ENCODE measurements at regions of chr7 and their contacts with region 1.

Region 1: DNA sequence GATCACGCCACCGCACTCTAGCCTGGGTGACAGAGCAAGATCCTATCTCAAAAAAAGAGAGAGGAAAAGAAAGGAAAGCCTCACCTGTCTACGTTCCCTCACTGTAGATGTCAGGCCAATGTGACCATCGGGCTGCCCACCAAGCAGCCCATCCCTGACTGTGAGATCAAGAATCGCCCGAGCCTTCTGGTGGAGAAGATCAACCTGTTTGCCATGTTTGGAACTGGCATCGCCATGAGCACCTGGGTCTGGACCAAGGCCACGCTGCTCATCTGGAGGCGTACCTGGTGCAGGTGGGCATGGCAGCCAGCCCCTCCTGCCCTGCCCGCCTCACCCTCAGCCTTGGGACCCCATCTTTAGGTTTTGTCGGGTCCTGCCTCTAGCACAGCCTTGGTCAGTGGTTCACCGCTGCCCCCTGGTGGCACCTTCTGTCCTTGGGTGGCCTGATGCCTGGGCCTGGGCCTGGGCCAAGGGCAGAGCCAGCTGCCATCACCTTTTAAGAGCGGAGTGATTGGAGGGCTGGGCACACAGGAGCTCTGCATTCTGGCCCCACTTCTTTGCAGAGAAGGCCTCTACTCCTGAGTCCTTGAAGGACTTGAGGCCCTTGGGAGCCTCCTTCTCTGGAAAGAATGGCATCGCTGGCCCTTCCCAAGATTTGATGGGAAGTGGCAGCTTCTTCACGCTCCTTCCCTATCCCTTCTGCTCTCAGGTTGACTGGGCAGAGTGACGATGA is 14.4 kb upstream of the AHCYL2 start:
- DNase-seq: peak; percentile 83 to 95 (median 92)
- ATAC-seq: peak; percentile 84 to 86
- H3K4me3 ChIP-seq: no peak overlapping the region
- H3K27ac ChIP-seq: no peak overlapping the region
- H3K4me1 ChIP-seq: no peaks in the 10 kb centered on the region
- H3K27me3 ChIP-seq: no peaks in the 10 kb centered on the region

Region 2: GRCh38 chr7:129163875-129164544 is 46.4 kb before region 1 on chr7:
- intact Hi-C with region 1: loop called in 3 of 4 experiments (anchors 1 to 5 kb)
- DNase-seq: no peak
- ATAC-seq: no peak
- H3K4me3 ChIP-seq: no peak overlapping the region
- H3K27ac ChIP-seq: no peak overlapping the region
- H3K4me1 ChIP-seq: no peaks in the 10 kb centered on the region
- H3K27me3 ChIP-seq: no peaks in the 10 kb centered on the region

Region 3: GRCh38 chr7:129169171-129169671 is 41.2 kb before region 1 on chr7:
- intact Hi-C with region 1: loop called in 3 of 4 experiments (anchors 1 to 5 kb)
- DNase-seq: peak; percentile 63 to 90 (median 88)
- ATAC-seq: peak; percentile 92 to 94
- H3K4me3 ChIP-seq: peak overlapping the region; percentile 50
- H3K27ac ChIP-seq: no peak overlapping the region
- H3K4me1 ChIP-seq: no peaks in the 10 kb centered on the region
- H3K27me3 ChIP-seq: no peaks in the 10 kb centered on the region

Region 4: DNA sequence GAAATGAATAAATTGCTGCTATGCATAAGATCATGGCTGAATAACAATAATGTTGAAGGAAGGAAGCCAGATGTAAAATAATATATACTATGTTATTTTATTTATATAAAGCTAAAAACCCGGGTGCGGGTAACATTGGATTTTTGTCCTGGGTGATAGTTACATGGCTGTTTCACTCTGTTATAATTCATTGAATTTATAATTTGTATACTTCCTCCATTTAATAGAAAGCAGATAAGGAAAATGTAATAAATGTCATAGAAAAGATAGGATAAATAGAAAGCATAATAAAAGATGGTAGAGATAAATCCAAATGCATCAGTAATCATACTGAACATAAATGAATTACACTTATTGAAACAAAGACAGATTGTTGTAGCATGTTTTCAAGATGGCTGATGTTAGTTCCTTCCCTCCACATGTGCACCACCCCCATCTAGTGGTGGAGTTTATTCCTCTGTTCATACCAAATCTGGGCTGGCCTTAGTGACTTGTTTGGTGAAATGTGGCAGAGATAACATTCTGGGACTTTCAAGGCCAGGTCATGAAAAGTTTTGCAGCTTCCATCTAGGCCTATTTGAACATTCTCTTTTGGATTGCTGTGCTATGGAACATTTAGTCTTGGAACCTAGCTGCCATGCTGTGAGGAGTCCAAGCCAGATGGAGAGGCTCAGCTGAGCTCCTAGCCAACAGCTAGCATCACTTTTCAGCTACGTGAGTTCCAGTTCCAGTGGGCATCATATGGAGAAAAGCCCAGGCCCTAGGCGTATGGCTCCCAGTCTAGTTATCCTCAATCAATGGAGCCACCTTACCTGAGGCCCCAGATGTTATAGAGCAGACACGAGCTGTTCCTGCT is 61.3 kb after region 1 on chr7:
- intact Hi-C with region 1: no loop called
- DNase-seq: no peak
- ATAC-seq: peak in 1 of 2 donors; percentile 71
- H3K4me3 ChIP-seq: no peak overlapping the region
- H3K27ac ChIP-seq: no peak overlapping the region
- H3K4me1 ChIP-seq: no peaks in the 10 kb centered on the region
- H3K27me3 ChIP-seq: no peaks in the 10 kb centered on the region

Region 5: GRCh38 chr7:129468087-129468486 is 257.7 kb after region 1 on chr7:
- intact Hi-C with region 1: loop called in 3 of 4 experiments (anchors 5 to 10 kb)
- DNase-seq: no peak
- ATAC-seq: no peak
- H3K4me3 ChIP-seq: no peak overlapping the region
- H3K27ac ChIP-seq: no peak overlapping the region
- H3K4me1 ChIP-seq: no peaks in the 10 kb centered on the region
- H3K27me3 ChIP-seq: no peaks in the 10 kb centered on the region

Measured in right cardiac atrium (tissue), 5 donors.